T-cell (primary cell): ENCODE measurements at regions of chr10 and their contacts with region 1.

Region 1: DNA sequence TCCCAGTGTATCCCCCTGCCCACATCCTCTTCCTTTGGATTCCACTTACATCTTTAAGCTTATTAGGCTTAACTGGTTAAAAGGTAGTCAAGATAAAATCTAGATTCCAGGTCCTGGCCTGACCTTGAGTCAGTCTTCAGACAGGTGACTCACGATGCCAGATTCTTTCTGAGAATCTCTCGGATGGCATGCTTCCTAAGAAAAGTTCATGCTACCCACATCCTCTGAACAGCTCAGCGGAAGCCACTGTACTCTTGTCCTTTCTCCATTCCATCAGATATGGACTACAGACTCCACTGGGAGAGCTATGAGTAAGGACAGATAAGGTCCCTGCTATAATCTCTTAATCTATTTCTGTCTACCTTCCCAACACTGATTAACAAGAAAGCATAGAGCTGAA is 43.4 kb downstream of the DNMBP start:
- DNase-seq: no peak
- ATAC-seq: no peak
- H3K4me3 ChIP-seq: no peak overlapping the region
- H3K4me3 Mint-ChIP-seq: no peak overlapping the region
- H3K27ac ChIP-seq: no peak overlapping the region
- H3K27ac Mint-ChIP-seq: no peak overlapping the region
- H3K4me1 ChIP-seq: no peaks in the 10 kb centered on the region
- H3K4me1 Mint-ChIP-seq: peaks cover 0 to 5% (median 0%) of the 10 kb centered on the region in 3 donors
- H3K27me3 ChIP-seq: no peaks in the 10 kb centered on the region
- H3K27me3 Mint-ChIP-seq: no peaks in the 10 kb centered on the region

Region 2: DNA sequence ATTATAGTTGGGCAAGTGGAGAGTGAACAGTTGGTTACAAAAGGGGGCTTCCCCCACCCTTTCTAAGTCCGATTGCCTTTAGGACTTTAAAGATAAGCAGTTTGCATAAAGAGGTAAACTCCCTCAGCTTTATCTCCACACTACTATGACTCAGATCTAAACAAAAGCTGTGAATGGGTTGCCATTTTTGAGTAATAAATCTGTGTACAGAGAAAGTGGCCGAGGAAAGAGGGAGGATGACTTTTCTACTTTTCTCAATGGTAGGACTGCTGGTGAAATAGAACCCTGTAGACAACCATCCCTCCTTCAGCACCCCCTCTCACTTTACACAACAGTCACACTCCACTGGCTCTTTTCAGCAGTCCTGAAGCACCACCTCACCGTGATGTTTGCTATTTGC is 27.7 kb before region 1 on chr10:
- CTCF ChIA-PET with region 1: no interaction called
- POLR2A ChIA-PET with region 1: no interaction called
- DNase-seq: no peak
- ATAC-seq: no peak
- H3K4me3 ChIP-seq: no peak overlapping the region
- H3K4me3 Mint-ChIP-seq: no peak overlapping the region
- H3K27ac ChIP-seq: no peak overlapping the region
- H3K27ac Mint-ChIP-seq: no peak overlapping the region
- H3K4me1 ChIP-seq: no peaks in the 10 kb centered on the region
- H3K4me1 Mint-ChIP-seq: no peaks in the 10 kb centered on the region
- H3K27me3 ChIP-seq: no peaks in the 10 kb centered on the region
- H3K27me3 Mint-ChIP-seq: no peaks in the 10 kb centered on the region

Region 3: GRCh38 chr10:100391163-100392002 is 425.1 kb after region 1 on chr10:
- CTCF ChIA-PET with region 1: no interaction called
- POLR2A ChIA-PET with region 1: interaction called in 1 of 2 experiments, 14 read pairs
- DNase-seq: no peak
- ATAC-seq: no peak
- H3K4me3 ChIP-seq: no peak overlapping the region
- H3K4me3 Mint-ChIP-seq: no peak overlapping the region
- H3K27ac ChIP-seq: no peak overlapping the region
- H3K27ac Mint-ChIP-seq: no peak overlapping the region
- H3K4me1 ChIP-seq: no peaks in the 10 kb centered on the region
- H3K4me1 Mint-ChIP-seq: peaks cover 0 to 4% (median 0%) of the 10 kb centered on the region in 3 donors
- H3K27me3 ChIP-seq: no peaks in the 10 kb centered on the region
- H3K27me3 Mint-ChIP-seq: no peaks in the 10 kb centered on the region